Aorta (tissue), 5 donors: ENCODE measurements at regions of chr2 and their contacts with region 1.

Region 1: DNA sequence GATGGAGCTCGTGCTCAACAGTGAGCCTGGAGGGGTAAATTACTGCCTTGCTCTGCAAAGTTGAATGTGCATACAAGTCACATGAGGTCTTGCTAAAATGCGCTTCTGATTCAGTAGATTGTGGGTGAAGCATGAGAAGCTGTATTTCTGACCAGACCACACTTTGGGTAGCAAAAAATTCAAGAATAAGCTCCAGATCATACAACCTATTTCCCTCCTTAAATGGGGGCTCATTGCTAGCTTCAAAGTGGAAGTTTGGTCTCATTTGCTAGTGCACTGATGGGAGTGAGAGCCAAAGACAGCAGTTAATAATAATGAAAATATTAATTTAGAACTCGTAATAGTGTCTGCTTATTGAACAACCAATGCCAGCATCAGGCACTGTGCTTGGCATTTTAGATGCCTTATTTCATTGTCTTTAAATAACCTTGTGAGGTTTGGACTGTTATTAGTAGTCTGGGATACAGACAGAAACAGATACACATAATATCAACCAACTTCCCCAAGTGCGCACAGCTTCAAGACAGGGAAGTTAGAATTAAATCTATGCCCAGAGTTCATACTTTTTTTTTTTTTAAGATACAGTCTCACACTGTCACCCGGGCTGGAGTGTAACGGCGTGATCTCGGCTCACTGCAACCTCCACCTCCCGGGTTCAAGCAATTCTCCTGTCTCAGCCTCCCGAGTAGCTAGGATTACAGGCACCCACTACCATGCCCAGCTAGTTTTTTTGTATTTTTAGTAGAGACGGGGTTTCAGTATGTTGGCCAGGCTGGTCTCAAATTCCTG is 18.0 kb downstream of the APOB start:
- DNase-seq: no peak
- ATAC-seq: peak; percentile 52
- H3K4me3 ChIP-seq: no peak overlapping the region
- H3K27ac ChIP-seq: peak overlapping the region; percentile 69 to 90
- H3K4me1 ChIP-seq: peaks cover 0 to 3% of the 10 kb centered on the region in 2 donors
- H3K27me3 ChIP-seq: no peaks in the 10 kb centered on the region

Region 2: GRCh38 chr2:20992201-20992711 is 33.6 kb before region 1 on chr2:
- intact Hi-C with region 1: loop called in 1 of 2 experiments (anchors 5 kb)
- DNase-seq: peak; percentile 79 to 84
- ATAC-seq: peak; percentile 79
- H3K4me3 ChIP-seq: no peak overlapping the region
- H3K27ac ChIP-seq: peak overlapping the region; percentile 29 to 94
- H3K4me1 ChIP-seq: no peaks in the 10 kb centered on the region
- H3K27me3 ChIP-seq: no peaks in the 10 kb centered on the region